ENCODE measurements at regions of chr9 and their contacts with region 1.

Region 1: DNA sequence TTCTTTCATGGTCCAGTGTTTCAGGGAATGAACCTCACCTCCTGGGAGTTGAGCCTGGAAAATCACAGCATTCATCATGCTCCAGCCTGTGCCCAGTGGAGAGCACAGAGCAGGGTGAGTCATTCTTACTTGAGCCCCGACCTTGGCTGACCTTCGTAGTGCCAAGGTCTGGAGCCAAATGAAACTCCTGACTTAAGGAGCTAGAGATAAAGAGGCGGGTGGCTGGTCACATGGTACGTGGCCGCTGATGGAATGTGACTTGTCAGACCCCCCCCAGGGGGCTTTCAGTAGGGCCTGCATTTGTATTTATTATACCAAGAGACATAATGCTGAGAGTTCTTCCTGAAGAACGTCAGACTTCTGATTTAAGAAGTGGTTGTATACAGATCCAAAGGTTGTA is 15.0 kb upstream of the PIP5K1B start:
- DNase-seq: no peak
- ATAC-seq: no peak; the same call in 1 of the 2 replicates
- H3K4me3 ChIP-seq: no peak overlapping the region
- H3K27ac ChIP-seq: no peak overlapping the region
- H3K4me1 ChIP-seq: no peaks in the 10 kb centered on the region
- H3K27me3 ChIP-seq: no peaks in the 10 kb centered on the region; the same call in 1 of the 2 replicates
- CTCF ChIP-seq: no peak

Region 2: DNA sequence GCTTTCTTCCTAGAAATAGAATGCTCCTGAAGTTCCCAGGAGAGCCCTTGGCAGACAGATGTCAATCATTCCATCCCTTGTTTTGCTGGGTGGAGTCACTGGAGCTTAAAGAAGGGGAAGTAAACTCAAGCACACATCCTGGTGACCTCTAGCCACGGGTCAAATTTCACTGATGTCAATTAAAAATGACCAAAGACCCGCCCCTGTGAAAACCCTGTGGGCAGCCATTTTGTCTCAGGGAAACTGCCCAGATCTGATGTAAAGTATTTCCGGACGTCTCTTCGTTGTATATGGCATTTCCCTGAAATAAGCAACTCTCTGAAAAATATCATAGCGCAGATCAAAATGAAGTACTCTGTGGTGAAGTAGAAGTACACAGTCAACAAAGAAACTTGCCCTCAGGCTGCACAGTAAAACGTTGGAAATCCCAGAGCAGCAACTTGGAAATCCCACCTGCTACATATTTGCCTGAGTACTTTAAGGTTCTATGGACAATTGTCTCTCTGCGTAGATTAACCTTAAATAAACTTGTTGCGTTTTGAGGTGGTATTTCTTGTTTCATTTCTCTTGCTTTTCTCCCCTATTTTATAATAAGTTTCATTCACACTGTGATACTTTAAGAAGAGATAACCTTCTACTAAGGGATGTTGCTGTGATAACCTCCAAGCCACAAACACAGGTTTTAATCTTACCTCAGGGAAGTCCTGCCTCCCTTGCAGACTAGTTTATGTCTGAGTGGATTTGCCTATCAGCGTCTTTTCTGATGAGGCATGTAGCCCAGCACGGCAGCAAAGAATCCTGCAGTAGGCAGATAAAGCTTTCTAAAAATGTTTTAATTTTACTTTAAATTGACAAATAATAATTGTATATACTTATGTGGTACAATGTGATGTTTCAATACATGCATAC is 45.9 kb before region 1 on chr9:
- CTCF ChIA-PET with region 1: no interaction called
- POLR2A ChIA-PET with region 1: no interaction called
- in situ Hi-C with region 1: no loop called
- intact Hi-C with region 1: loop called (anchors 10 kb)
- DNase-seq: no peak
- ATAC-seq: no peak
- H3K4me3 ChIP-seq: no peak overlapping the region
- H3K27ac ChIP-seq: no peak overlapping the region
- H3K4me1 ChIP-seq: no peaks in the 10 kb centered on the region
- H3K27me3 ChIP-seq: no peaks in the 10 kb centered on the region
- CTCF ChIP-seq: no peak

Measured in Panc1 (cell line).